ENCODE measurements at regions of chr4 and their contacts with region 1.

Region 1: GRCh38 chr4:70505151-70505748 is 13.1 kb upstream of the AMTN start:
- DNase-seq: peak; percentile 38
- ATAC-seq: peak; percentile 85
- H3K4me3 ChIP-seq: no peak overlapping the region
- H3K27ac ChIP-seq: no peak overlapping the region
- H3K4me1 ChIP-seq: no peaks in the 10 kb centered on the region
- H3K27me3 ChIP-seq: no peaks in the 10 kb centered on the region
- CTCF ChIP-seq: peak; percentile 86
- EP300 ChIP-seq: no peak
- POLR2A ChIP-seq: no peak
- RAD21 ChIP-seq: peak; percentile 84

Region 2: GRCh38 chr4:69689599-69689998 is 815.7 kb before region 1 on chr4:
- CTCF ChIA-PET with region 1: interaction called, 15 read pairs
- POLR2A ChIA-PET with region 1: no interaction called
- in situ Hi-C with region 1: loop called (anchors 25 kb)
- intact Hi-C with region 1: loop called (anchors 1 kb)
- DNase-seq: peak; percentile 66
- ATAC-seq: no peak
- H3K4me3 ChIP-seq: no peak overlapping the region
- H3K27ac ChIP-seq: peak overlapping the region; percentile 2
- H3K4me1 ChIP-seq: peaks cover 19% of the 10 kb centered on the region
- H3K27me3 ChIP-seq: no peaks in the 10 kb centered on the region
- CTCF ChIP-seq: peak; percentile 71
- EP300 ChIP-seq: no peak
- POLR2A ChIP-seq: no peak
- RAD21 ChIP-seq: peak; percentile 82

Region 3: GRCh38 chr4:69800599-69800998 is 704.7 kb before region 1 on chr4:
- CTCF ChIA-PET with region 1: no interaction called
- POLR2A ChIA-PET with region 1: no interaction called
- in situ Hi-C with region 1: no loop called
- intact Hi-C with region 1: loop called (anchors 5 kb)
- DNase-seq: no peak
- ATAC-seq: no peak
- H3K4me3 ChIP-seq: no peak overlapping the region
- H3K27ac ChIP-seq: no peak overlapping the region
- H3K4me1 ChIP-seq: no peaks in the 10 kb centered on the region
- H3K27me3 ChIP-seq: no peaks in the 10 kb centered on the region
- CTCF ChIP-seq: no peak
- EP300 ChIP-seq: no peak
- POLR2A ChIP-seq: no peak
- RAD21 ChIP-seq: no peak

Region 4: DNA sequence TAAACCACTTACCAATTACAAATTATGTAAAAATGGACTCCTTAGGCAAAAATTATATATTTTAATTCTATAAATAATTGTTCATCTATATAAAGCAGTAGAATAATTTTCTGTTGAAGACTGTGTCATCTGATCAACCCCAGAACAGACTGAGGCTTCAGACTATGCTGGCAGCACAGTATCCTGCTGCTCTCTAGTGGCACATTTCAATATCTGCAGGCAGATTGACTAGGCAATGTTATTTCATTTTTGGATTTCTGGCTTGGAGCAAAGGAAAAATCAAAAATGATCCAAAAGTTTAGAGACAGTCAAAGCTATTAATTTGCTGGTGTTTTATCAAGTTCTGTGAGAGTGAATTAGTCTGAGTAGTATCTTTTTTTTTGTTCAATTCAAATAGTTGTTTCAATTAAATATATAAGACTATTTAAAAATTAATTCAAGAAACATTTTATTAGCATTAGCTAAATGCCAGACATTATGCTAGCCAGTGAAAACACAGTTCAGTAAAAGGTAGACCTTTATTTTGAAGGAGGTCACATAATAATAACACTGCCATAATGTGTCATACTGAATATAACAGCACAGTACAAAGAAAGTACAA is 624.0 kb before region 1 on chr4:
- CTCF ChIA-PET with region 1: interaction called, 3 read pairs
- POLR2A ChIA-PET with region 1: no interaction called
- in situ Hi-C with region 1: no loop called
- intact Hi-C with region 1: loop called (anchors 1 kb)
- DNase-seq: peak; percentile 66
- ATAC-seq: peak; percentile 74
- H3K4me3 ChIP-seq: no peak overlapping the region
- H3K27ac ChIP-seq: peak overlapping the region; percentile 17
- H3K4me1 ChIP-seq: peaks cover 53% of the 10 kb centered on the region
- H3K27me3 ChIP-seq: no peaks in the 10 kb centered on the region
- CTCF ChIP-seq: peak; percentile 89
- EP300 ChIP-seq: peak in 1 of 2 experiments; percentile 39; a peak in 2 of 4 replicates
- POLR2A ChIP-seq: no peak
- RAD21 ChIP-seq: peak; percentile 89

Region 5: GRCh38 chr4:69896530-69897116 is 608.6 kb before region 1 on chr4:
- CTCF ChIA-PET with region 1: interaction called, 4 read pairs
- POLR2A ChIA-PET with region 1: no interaction called
- in situ Hi-C with region 1: loop called (anchors 5 kb)
- intact Hi-C with region 1: loop called (anchors 2 kb)
- DNase-seq: peak; percentile 12
- ATAC-seq: no peak
- H3K4me3 ChIP-seq: no peak overlapping the region
- H3K27ac ChIP-seq: no peak overlapping the region
- H3K4me1 ChIP-seq: peaks cover 7% of the 10 kb centered on the region; the same call in 1 of the 2 replicates
- H3K27me3 ChIP-seq: no peaks in the 10 kb centered on the region
- CTCF ChIP-seq: peak; percentile 52
- EP300 ChIP-seq: no peak
- POLR2A ChIP-seq: no peak
- RAD21 ChIP-seq: no peak

Region 6: DNA sequence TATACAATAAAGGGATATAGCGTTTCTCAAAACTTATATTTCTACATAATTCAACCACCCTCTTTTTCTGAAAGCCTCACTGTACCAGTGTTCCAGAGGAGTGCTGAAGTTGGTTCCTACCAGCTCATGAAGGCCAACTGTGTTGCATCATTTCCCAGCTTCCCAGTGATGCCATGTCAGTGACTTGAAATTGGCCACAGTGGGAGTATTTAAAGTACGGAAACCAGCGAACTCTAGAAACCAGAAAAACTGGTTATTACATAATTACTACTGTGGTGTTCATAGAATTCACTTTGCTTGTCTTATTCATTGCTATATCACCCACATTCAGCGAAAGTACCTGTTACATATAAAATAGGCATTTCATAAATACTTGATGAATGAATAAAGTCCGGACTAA is 1143.2 kb after region 1 on chr4:
- CTCF ChIA-PET with region 1: no interaction called
- POLR2A ChIA-PET with region 1: no interaction called
- in situ Hi-C with region 1: no loop called
- intact Hi-C with region 1: no loop called
- DNase-seq: no peak
- ATAC-seq: no peak
- H3K4me3 ChIP-seq: no peak overlapping the region
- H3K27ac ChIP-seq: no peak overlapping the region
- H3K4me1 ChIP-seq: no peaks in the 10 kb centered on the region
- H3K27me3 ChIP-seq: no peaks in the 10 kb centered on the region
- CTCF ChIP-seq: no peak
- EP300 ChIP-seq: no peak
- POLR2A ChIP-seq: no peak
- RAD21 ChIP-seq: no peak